B cell (primary cell): ENCODE measurements at regions of chr6 and their contacts with region 1.

Region 1: GRCh38 chr6:30463651-30464618 is 25.4 kb upstream of the HLA-E start:
- DNase-seq: peak; percentile 71
- ATAC-seq: peak; percentile 58
- H3K4me3 ChIP-seq: peak overlapping the region in 4 of 5 experiments; percentile 8 to 41 (median 30)
- H3K4me3 Mint-ChIP-seq: peak overlapping the region; percentile 65
- H3K27ac ChIP-seq: no peak overlapping the region
- H3K27ac Mint-ChIP-seq: no peak overlapping the region
- H3K4me1 ChIP-seq: peaks cover 42% of the 10 kb centered on the region in 2 donors
- H3K4me1 Mint-ChIP-seq: peaks cover 43% of the 10 kb centered on the region
- H3K27me3 ChIP-seq: peaks cover 0 to 90% (median 77%) of the 10 kb centered on the region in 4 experiments
- H3K27me3 Mint-ChIP-seq: peaks cover 74% of the 10 kb centered on the region
- CTCF ChIP-seq: no peak

Region 2: GRCh38 chr6:29426655-29427054 is 1037.3 kb before region 1 on chr6:
- CTCF ChIA-PET with region 1: no interaction called
- POLR2A ChIA-PET with region 1: no interaction called
- intact Hi-C with region 1: no loop called
- DNase-seq: no peak
- ATAC-seq: no peak
- H3K4me3 ChIP-seq: no peak overlapping the region
- H3K4me3 Mint-ChIP-seq: no peak overlapping the region
- H3K27ac ChIP-seq: no peak overlapping the region
- H3K27ac Mint-ChIP-seq: no peak overlapping the region
- H3K4me1 ChIP-seq: no peaks in the 10 kb centered on the region
- H3K4me1 Mint-ChIP-seq: no peaks in the 10 kb centered on the region
- H3K27me3 ChIP-seq: peaks cover 0 to 2% (median 0%) of the 10 kb centered on the region in 4 experiments
- H3K27me3 Mint-ChIP-seq: peaks cover 29% of the 10 kb centered on the region
- CTCF ChIP-seq: no peak

Region 3: DNA sequence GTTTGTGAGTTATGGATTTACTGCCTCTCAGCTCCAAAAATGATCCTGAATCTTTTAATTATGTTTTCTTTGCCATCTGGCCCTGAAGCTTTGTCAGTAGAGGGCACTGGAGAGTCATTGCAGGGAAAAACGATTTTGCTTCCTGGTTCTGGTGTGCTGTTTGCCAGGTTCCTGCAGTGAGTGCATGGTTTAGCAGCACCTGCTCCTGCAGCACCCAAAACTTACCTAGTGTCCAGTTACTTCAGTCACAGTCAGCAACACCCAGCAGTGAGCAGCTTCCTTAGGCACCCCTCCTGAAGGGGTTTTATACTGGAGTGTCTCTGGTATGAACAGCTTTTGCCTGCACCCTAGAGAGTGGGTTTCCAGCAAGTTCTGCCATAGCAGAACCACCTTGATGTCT is 244.7 kb before region 1 on chr6:
- CTCF ChIA-PET with region 1: no interaction called
- POLR2A ChIA-PET with region 1: no interaction called
- intact Hi-C with region 1: no loop called
- DNase-seq: peak; percentile 73
- ATAC-seq: no peak
- H3K4me3 ChIP-seq: no peak overlapping the region
- H3K4me3 Mint-ChIP-seq: no peak overlapping the region
- H3K27ac ChIP-seq: no peak overlapping the region
- H3K27ac Mint-ChIP-seq: no peak overlapping the region
- H3K4me1 ChIP-seq: peaks cover 7 to 16% of the 10 kb centered on the region in 2 donors
- H3K4me1 Mint-ChIP-seq: peaks cover 13% of the 10 kb centered on the region
- H3K27me3 ChIP-seq: no peaks in the 10 kb centered on the region
- H3K27me3 Mint-ChIP-seq: peaks cover 3% of the 10 kb centered on the region
- CTCF ChIP-seq: peak; percentile 73

Region 4: GRCh38 chr6:30311101-30311500 is 152.8 kb before region 1 on chr6:
- CTCF ChIA-PET with region 1: no interaction called
- POLR2A ChIA-PET with region 1: no interaction called
- intact Hi-C with region 1: no loop called
- DNase-seq: no peak
- ATAC-seq: no peak
- H3K4me3 ChIP-seq: no peak overlapping the region
- H3K4me3 Mint-ChIP-seq: no peak overlapping the region
- H3K27ac ChIP-seq: no peak overlapping the region
- H3K27ac Mint-ChIP-seq: no peak overlapping the region
- H3K4me1 ChIP-seq: no peaks in the 10 kb centered on the region
- H3K4me1 Mint-ChIP-seq: peaks cover 15% of the 10 kb centered on the region
- H3K27me3 ChIP-seq: no peaks in the 10 kb centered on the region
- H3K27me3 Mint-ChIP-seq: no peaks in the 10 kb centered on the region
- CTCF ChIP-seq: no peak

Region 5: DNA sequence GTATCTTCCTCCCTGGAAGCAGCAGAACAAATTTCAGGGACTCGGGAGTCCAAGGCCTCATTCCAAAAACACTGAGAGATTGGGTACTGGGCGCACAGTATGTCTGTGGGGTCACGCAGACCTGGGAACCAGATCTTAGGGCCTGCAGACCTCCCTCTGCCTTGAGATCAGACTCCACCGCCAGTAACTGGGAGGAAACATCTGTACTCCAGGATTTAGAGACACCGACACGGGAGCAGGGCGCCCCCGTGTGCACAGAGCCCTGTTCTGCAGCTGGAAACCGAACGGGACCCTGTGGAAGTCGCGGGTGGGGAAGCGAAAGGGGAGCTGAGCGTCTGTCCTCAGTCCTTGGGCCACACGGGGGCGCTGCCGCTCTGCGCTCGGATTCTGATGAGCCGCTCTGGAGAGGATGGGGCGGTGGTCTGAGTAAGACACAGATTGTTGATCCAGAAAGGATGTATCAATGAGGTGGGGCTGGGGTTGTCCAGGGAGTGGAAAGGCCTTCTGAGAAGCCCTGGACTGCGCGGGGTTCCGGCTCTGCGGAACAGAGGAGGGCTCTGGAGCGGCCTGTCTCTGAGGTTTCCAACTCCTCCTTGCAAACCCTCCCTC is 10.3 kb before region 1 on chr6:
- CTCF ChIA-PET with region 1: interaction called, 88 read pairs
- POLR2A ChIA-PET with region 1: no interaction called
- intact Hi-C with region 1: loop called (anchors 2 kb)
- DNase-seq: peak; percentile 88
- ATAC-seq: peak; percentile 90
- H3K4me3 ChIP-seq: no peak overlapping the region
- H3K4me3 Mint-ChIP-seq: peak overlapping the region; percentile 69
- H3K27ac ChIP-seq: no peak overlapping the region
- H3K27ac Mint-ChIP-seq: peak overlapping the region; percentile 63
- H3K4me1 ChIP-seq: peaks cover 41 to 43% of the 10 kb centered on the region in 2 donors
- H3K4me1 Mint-ChIP-seq: peaks cover 32% of the 10 kb centered on the region
- H3K27me3 ChIP-seq: peaks cover 0 to 87% (median 62%) of the 10 kb centered on the region in 4 experiments
- H3K27me3 Mint-ChIP-seq: peaks cover 75% of the 10 kb centered on the region
- CTCF ChIP-seq: peak; percentile 83